ENCODE measurements at regions of chr1 and their contacts with region 1.

Region 1: DNA sequence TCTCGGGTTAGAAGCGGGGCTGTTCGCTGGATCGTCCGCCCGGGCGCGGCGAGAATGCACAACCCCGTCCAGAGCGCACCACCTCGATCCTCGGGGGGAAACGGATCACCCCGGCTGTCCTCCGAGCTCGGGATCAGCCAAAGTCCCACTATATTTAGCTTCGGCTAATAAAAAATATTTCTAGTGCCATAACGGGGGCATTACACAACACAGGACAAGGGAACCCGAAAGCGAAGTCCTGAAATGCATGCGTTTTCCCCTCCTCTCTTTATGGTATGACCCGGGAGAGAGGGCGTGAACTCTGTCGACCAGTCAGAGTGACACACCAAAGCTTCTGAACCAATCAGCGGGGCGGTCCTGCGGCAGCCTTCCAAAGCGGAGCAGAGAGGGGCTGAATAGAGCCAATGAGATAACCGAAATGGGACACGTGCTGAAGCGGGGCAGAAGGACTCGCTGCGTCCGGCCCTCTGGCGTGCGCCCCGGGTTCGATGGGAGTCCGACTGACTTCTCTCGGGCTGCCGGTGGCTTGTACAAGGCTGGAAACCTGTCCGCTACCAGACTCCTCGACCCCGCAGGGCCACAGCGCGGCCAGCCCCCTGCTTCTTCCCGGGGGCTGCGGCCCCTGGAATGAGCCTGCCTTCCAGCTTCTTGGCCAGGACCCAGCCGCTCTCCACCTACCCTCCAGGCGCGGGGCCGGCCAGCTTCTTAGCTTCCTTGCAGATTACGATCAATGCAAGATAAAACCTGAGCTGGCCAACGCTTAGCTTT is at the start of gene ALDH4A1:
- DNase-seq: peak; percentile 97
- H3K4me3 Mint-ChIP-seq: peak within 1 kb of the TSS; percentile 89
- H3K27ac Mint-ChIP-seq: peak within 1 kb of the TSS; percentile 95
- H3K4me1 Mint-ChIP-seq: peaks cover 19% of the 10 kb centered on the region
- H3K27me3 Mint-ChIP-seq: no peaks in the 10 kb centered on the region
- total RNA-seq, gene ALDH4A1: 7.2 to 7.3 TPM

Region 2: GRCh38 chr1:18913065-18913835 is 10.5 kb after region 1 on chr1:
- CTCF ChIA-PET with region 1: interaction called, 51 read pairs
- POLR2A ChIA-PET with region 1: interaction called, 6 read pairs
- intact Hi-C with region 1: no loop called
- DNase-seq: peak; percentile 84
- H3K4me3 Mint-ChIP-seq: no peak overlapping the region
- H3K27ac Mint-ChIP-seq: peak overlapping the region; percentile 81
- H3K4me1 Mint-ChIP-seq: peaks cover 17% of the 10 kb centered on the region
- H3K27me3 Mint-ChIP-seq: no peaks in the 10 kb centered on the region

Region 3: DNA sequence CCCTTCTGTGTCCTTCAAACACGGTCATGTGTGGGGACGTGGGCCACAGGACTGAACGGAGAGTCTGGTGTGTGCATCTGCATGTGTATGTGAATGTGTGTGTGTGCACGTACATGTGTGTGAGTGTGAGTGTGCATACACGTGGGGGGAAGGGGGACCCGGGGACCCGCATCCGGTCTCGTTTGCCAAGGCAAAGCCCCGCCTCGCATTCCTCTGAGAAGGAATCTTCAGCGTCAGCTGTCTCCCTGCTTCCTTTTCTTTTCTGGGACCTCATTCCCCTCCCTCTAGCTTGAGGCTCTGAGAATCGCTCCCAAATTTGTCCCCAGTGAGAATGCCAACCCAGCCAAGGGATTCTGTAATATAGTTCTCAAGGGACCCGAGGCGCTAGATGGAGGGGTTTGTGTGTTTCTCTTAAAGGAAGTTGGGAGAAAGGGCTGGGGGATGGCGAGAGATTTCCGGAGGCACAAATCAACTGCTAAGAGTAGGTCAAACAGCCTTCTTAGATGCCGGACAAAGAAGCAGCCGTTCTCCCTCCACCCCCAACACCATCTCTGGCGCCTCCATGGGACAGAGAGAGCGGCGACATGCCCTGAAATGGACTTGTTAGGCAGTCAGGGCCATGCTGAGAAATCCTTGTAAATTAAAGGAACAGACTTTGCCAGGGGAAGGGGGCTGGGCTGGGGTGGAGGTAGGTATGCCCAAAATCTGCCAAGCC is 47.1 kb after region 1 on chr1:
- CTCF ChIA-PET with region 1: interaction called, 55 read pairs
- POLR2A ChIA-PET with region 1: interaction called, 6 read pairs
- intact Hi-C with region 1: loop called (anchors 1 kb)
- DNase-seq: peak; percentile 49
- H3K4me3 Mint-ChIP-seq: peak overlapping the region; percentile 80
- H3K27ac Mint-ChIP-seq: peak overlapping the region; percentile 98
- H3K4me1 Mint-ChIP-seq: peaks cover 90% of the 10 kb centered on the region
- H3K27me3 Mint-ChIP-seq: no peaks in the 10 kb centered on the region

Region 4: DNA sequence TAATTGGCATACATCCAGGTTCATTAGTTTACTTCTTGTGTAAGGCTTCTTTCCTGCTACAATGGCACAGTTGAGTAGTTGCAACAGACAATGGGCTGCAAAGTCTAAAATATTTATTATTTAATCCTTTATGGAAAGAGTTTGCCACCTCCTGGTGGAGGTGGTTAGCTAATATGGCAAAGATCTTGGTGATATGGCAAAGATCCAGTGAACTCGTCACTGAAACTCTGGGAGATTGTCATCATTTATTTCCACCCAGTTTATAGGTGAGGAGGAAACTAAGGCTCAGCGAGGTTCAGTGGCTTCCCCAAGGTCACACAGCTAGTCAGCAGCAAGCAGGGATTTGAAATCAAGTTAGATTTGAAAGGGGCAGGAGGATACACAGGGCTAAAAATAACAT is 69.8 kb after region 1 on chr1:
- CTCF ChIA-PET with region 1: interaction called, 24 read pairs
- POLR2A ChIA-PET with region 1: no interaction called
- intact Hi-C with region 1: loop called (anchors 1 kb)
- DNase-seq: no peak
- H3K4me3 Mint-ChIP-seq: no peak overlapping the region
- H3K27ac Mint-ChIP-seq: no peak overlapping the region
- H3K4me1 Mint-ChIP-seq: peaks cover 9% of the 10 kb centered on the region
- H3K27me3 Mint-ChIP-seq: peaks cover 12% of the 10 kb centered on the region

Region 5: GRCh38 chr1:19087737-19088594 is 185.3 kb after region 1 on chr1:
- CTCF ChIA-PET with region 1: interaction called, 10 read pairs
- POLR2A ChIA-PET with region 1: no interaction called
- intact Hi-C with region 1: loop called (anchors 5 kb)
- DNase-seq: peak; percentile 37
- H3K4me3 Mint-ChIP-seq: no peak overlapping the region
- H3K27ac Mint-ChIP-seq: peak overlapping the region; percentile 69
- H3K4me1 Mint-ChIP-seq: peaks cover 29% of the 10 kb centered on the region
- H3K27me3 Mint-ChIP-seq: no peaks in the 10 kb centered on the region

Region 6: DNA sequence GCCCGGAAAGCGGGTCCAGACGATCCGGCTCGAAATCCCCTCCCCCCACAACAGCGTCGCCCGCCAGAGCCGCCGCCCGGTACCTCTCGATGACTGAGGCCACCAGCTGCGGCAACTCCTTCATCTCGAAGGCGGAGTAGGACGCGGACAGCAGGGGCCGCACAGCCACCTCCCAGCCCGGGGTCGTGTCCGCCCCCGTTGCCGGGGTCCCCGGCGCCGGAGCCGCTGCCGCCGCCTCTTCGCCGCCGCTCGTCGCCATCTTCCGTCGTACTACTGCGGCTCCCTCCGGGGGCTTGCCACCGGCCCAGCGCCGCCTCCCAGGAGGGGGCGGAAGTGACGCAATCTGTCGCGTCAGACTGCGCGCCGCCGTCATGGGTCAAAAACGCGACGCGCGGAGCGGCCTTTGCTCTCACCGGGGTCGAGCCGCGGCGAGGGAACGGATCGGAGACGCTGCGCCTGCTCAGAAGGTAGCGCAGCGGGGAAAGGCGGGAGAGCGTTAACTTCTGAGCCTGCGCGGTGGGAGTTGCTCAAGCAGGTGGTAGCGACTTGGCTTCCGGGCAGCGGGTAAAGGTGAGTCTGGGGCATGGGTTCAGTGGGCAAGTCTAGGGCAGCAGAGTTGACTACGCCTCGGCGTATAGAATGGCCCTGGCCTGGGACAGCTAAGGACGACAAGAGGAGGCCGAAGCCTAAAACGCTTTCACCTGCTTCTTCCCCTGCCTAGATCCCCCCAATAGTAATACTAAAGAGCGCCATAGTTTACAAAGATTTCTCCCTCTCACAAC is 307.5 kb after region 1 on chr1 and contains the start of gene UBR4:
- CTCF ChIA-PET with region 1: no interaction called
- POLR2A ChIA-PET with region 1: no interaction called
- intact Hi-C with region 1: loop called (anchors 10 kb)
- DNase-seq: peak; percentile 98
- H3K4me3 Mint-ChIP-seq: peak within 1 kb of the TSS; percentile 94
- H3K27ac Mint-ChIP-seq: peak within 1 kb of the TSS; percentile 96
- H3K4me1 Mint-ChIP-seq: peaks cover 68% of the 10 kb centered on the region
- H3K27me3 Mint-ChIP-seq: no peaks in the 10 kb centered on the region
- total RNA-seq, gene UBR4: 104 to 116 TPM